PC-9 (cell line): ENCODE measurements at regions of chr20 and their contacts with region 1.

Region 1: GRCh38 chr20:43767686-43768474 is 41.1 kb upstream of the GTSF1L start:
- DNase-seq: peak in 1 of 2 experiments; percentile 25
- H3K4me3 ChIP-seq: no peak overlapping the region
- H3K27ac ChIP-seq: no peak overlapping the region
- H3K4me1 ChIP-seq: peaks cover 5% of the 10 kb centered on the region; the same call in 1 of the 2 replicates
- H3K27me3 ChIP-seq: no peaks in the 10 kb centered on the region
- CTCF ChIP-seq: no peak

Region 2: GRCh38 chr20:44123251-44123650 is 355.4 kb after region 1 on chr20:
- CTCF ChIA-PET with region 1: no interaction called
- POLR2A ChIA-PET with region 1: interaction called, 28 read pairs
- intact Hi-C with region 1: no loop called
- DNase-seq: no peak
- H3K4me3 ChIP-seq: no peak overlapping the region
- H3K27ac ChIP-seq: no peak overlapping the region
- H3K4me1 ChIP-seq: no peaks in the 10 kb centered on the region
- H3K27me3 ChIP-seq: no peaks in the 10 kb centered on the region
- CTCF ChIP-seq: no peak

Region 3: DNA sequence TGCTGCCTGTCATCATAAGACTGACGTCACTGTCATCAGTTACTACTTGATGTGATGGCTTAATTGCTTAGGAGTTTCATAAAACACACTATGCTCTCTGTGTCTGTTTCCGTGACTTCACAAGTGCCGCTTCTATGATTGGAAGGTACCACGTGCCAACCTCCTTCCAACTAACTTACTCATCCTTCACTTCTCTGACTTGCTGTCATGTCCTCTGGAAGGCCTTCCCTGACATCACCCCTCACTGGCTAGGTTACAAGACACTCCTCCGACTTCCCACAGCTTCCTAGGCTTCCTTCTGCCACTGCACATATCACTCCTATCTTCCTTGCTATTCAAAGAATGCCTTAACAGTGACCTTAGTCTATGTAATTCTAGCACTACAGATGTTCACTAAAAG is 733.6 kb after region 1 on chr20:
- CTCF ChIA-PET with region 1: no interaction called
- POLR2A ChIA-PET with region 1: interaction called, 14 read pairs
- intact Hi-C with region 1: no loop called
- DNase-seq: no peak
- H3K4me3 ChIP-seq: no peak overlapping the region
- H3K27ac ChIP-seq: no peak overlapping the region
- H3K4me1 ChIP-seq: peaks cover 17% of the 10 kb centered on the region
- H3K27me3 ChIP-seq: no peaks in the 10 kb centered on the region
- CTCF ChIP-seq: no peak